T-cell (primary cell): ENCODE measurements at regions of chr2 and their contacts with region 1.

Region 1: DNA sequence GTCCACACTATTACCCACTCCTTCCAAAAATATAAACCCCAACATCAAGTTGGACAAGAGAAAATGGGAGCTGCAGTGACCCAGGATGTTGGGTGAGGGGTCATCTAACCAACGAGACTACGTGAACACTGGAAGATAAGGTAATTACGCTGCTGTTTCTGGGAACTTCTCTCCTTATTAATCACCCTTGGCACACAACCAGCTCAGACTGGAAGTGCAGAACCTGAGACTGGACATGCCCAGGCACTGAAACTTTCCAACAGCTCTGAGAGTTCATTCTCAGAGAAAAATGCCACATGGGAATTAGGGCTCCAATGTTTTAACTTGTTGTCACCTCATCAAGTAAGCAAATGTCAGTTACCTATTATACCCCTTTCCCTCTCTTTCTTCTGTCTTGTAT is 135.3 kb downstream of the CCDC148 start:
- DNase-seq: no peak
- ATAC-seq: no peak
- H3K4me3 ChIP-seq: no peak overlapping the region
- H3K4me3 Mint-ChIP-seq: no peak overlapping the region
- H3K27ac ChIP-seq: no peak overlapping the region
- H3K27ac Mint-ChIP-seq: no peak overlapping the region
- H3K4me1 ChIP-seq: no peaks in the 10 kb centered on the region
- H3K4me1 Mint-ChIP-seq: no peaks in the 10 kb centered on the region
- H3K27me3 ChIP-seq: no peaks in the 10 kb centered on the region
- H3K27me3 Mint-ChIP-seq: no peaks in the 10 kb centered on the region

Region 2: GRCh38 chr2:159863526-159864160 is 1542.4 kb after region 1 on chr2:
- CTCF ChIA-PET with region 1: no interaction called
- POLR2A ChIA-PET with region 1: interaction called in 1 of 2 experiments, 18 read pairs
- DNase-seq: no peak
- ATAC-seq: no peak
- H3K4me3 ChIP-seq: no peak overlapping the region
- H3K4me3 Mint-ChIP-seq: no peak overlapping the region
- H3K27ac ChIP-seq: no peak overlapping the region
- H3K27ac Mint-ChIP-seq: no peak overlapping the region
- H3K4me1 ChIP-seq: no peaks in the 10 kb centered on the region
- H3K4me1 Mint-ChIP-seq: no peaks in the 10 kb centered on the region
- H3K27me3 ChIP-seq: no peaks in the 10 kb centered on the region
- H3K27me3 Mint-ChIP-seq: no peaks in the 10 kb centered on the region